Thyroid gland (tissue), 4 donors: ENCODE measurements at regions of chr15 and their contacts with region 1.

Region 1: GRCh38 chr15:72473614-72474465 is at the start of gene ARIH1:
- DNase-seq: peak; percentile 96 to 97
- H3K4me3 ChIP-seq: peak within 1 kb of the TSS; percentile 42 to 90 (median 52)
- H3K27ac ChIP-seq: peak within 1 kb of the TSS; percentile 98 to 99 (median 98)
- H3K4me1 ChIP-seq: peaks cover 22 to 33% of the 10 kb centered on the region in 2 donors
- H3K27me3 ChIP-seq: no peaks in the 10 kb centered on the region
- CTCF ChIP-seq: no peak
- POLR2A ChIP-seq: peak; percentile 92 to 100
- total RNA-seq, gene ARIH1: 42.6 to 90.0 (median 58.5) TPM

Region 2: DNA sequence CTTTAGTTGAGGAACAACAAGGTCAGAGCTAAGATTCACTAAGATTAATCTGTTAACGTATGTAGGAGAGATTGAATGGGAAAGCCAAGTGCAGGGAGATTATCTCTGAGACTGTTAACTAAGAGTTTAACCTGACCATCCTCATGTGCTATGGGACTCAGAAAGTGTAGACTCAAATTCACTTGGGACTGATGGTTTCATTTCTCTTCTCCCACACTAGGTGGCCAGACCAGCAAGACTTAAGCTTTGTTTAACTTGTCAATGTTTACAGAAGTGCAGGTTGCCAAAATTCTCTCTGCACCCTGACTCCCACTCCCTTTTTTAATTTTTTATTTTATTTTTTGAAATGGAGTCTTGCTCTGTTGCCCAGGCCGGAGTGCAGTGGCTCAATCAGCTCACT is 91.7 kb before region 1 on chr15:
- intact Hi-C with region 1: loop called (anchors 10 kb)
- DNase-seq: no peak
- H3K4me3 ChIP-seq: no peak overlapping the region
- H3K27ac ChIP-seq: no peak overlapping the region
- H3K4me1 ChIP-seq: no peaks in the 10 kb centered on the region
- H3K27me3 ChIP-seq: no peaks in the 10 kb centered on the region
- CTCF ChIP-seq: no peak
- POLR2A ChIP-seq: no peak

Region 3: GRCh38 chr15:72420576-72420975 is 53.3 kb before region 1 on chr15:
- intact Hi-C with region 1: no loop called
- DNase-seq: no peak
- H3K4me3 ChIP-seq: no peak overlapping the region
- H3K27ac ChIP-seq: no peak overlapping the region
- H3K4me1 ChIP-seq: no peaks in the 10 kb centered on the region
- H3K27me3 ChIP-seq: no peaks in the 10 kb centered on the region
- CTCF ChIP-seq: no peak
- POLR2A ChIP-seq: no peak